ENCODE measurements at regions of chr5 and their contacts with region 1.

Region 1: GRCh38 chr5:59810041-59810440 is 83.5 kb downstream of the PDE4D start:
- DNase-seq: peak; percentile 55 to 71 (median 64)
- ATAC-seq: peak in 3 of 4 donors; percentile 52 to 63 (median 60)
- H3K4me3 ChIP-seq: peak overlapping the region in 1 of 12 donors; percentile 12
- H3K27ac ChIP-seq: no peak overlapping the region
- H3K4me1 ChIP-seq: peaks cover 0 to 6% (median 0%) of the 10 kb centered on the region in 12 donors
- H3K27me3 ChIP-seq: peaks cover 0 to 17% (median 6%) of the 10 kb centered on the region in 9 donors
- CTCF ChIP-seq: peak; percentile 87 to 96 (median 92)
- POLR2A ChIP-seq: no peak

Region 2: GRCh38 chr5:59923465-59923864 is 113.4 kb after region 1 on chr5:
- intact Hi-C with region 1: loop called in 4 of 10 experiments (anchors 5 to 10 kb)
- DNase-seq: no peak
- ATAC-seq: no peak
- H3K4me3 ChIP-seq: no peak overlapping the region
- H3K27ac ChIP-seq: no peak overlapping the region
- H3K4me1 ChIP-seq: no peaks in the 10 kb centered on the region
- H3K27me3 ChIP-seq: peaks cover 0 to 7% (median 0%) of the 10 kb centered on the region in 9 donors
- CTCF ChIP-seq: peak in 6 of 12 donors; percentile 14 to 31 (median 24)
- POLR2A ChIP-seq: no peak

Region 3: DNA sequence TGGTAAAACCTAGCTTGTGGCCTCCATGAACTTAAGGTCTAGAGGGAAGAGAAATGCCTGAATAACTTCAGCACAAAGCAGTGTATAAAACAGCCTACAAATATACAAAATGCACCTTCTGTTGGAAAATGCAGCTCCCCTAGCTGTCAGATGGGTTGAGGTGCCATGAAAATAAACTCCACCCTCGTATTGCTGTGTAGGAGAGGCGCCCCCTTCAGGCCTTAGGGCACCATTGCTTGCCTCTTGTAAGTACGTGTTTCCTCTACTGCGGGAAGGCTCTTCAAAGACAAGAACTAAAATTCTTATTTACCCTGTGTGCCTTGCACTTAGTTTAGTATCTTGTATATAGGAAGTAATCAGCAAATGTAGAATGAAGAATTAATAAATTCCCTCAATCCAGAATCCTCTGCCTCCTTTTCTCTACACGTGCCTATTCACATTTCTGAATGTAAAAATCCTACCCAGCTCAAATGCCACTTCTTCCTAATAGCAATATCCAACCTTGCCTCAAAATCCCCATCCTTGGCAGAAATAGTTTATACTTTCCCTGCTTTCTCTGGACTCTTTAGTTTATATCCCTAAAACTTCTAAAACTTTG is 477.2 kb after region 1 on chr5:
- intact Hi-C with region 1: loop called in 1 of 10 experiments (anchors 5 kb)
- DNase-seq: peak in 1 of 5 donors; percentile 16
- ATAC-seq: no peak
- H3K4me3 ChIP-seq: no peak overlapping the region
- H3K27ac ChIP-seq: no peak overlapping the region
- H3K4me1 ChIP-seq: no peaks in the 10 kb centered on the region
- H3K27me3 ChIP-seq: peaks cover 0 to 9% (median 0%) of the 10 kb centered on the region in 9 donors
- CTCF ChIP-seq: peak in 9 of 12 donors; percentile 11 to 68 (median 36)
- POLR2A ChIP-seq: no peak

Region 4: DNA sequence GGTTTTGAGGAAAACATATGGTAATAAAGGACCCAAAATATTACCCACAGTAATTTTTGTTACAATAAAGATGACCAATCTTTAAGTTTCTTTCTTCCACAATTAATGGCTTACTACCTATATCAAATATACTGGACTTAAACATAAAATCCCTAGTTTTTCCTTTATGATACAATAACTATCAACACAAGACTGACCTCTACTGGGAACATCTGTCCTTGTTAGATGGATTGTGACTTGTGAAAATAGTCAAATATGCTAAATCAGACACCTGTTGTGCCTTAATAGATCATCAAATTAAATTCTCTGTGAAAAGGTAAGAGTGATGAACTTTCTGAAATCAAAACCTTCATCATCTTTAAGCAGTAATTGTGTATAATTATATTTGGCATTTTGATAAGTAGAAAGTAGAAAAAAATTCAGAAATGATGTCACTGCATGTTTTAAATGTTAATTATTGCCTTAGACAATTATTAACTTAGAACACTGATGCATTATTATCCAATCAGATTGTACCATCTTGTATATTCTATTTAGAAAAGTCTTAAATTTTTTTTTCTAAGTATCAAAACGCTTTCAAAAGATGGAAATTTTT is 776.4 kb after region 1 on chr5:
- intact Hi-C with region 1: loop called (anchors 1 to 10 kb)
- DNase-seq: no peak
- ATAC-seq: no peak
- H3K4me3 ChIP-seq: no peak overlapping the region
- H3K27ac ChIP-seq: no peak overlapping the region
- H3K4me1 ChIP-seq: no peaks in the 10 kb centered on the region
- H3K27me3 ChIP-seq: no peaks in the 10 kb centered on the region
- CTCF ChIP-seq: peak; percentile 26 to 62 (median 46)
- POLR2A ChIP-seq: no peak

Region 5: GRCh38 chr5:60668686-60669304 is 858.8 kb after region 1 on chr5:
- intact Hi-C with region 1: loop called in 7 of 10 experiments (anchors 2 to 10 kb)
- DNase-seq: no peak
- ATAC-seq: no peak
- H3K4me3 ChIP-seq: no peak overlapping the region
- H3K27ac ChIP-seq: no peak overlapping the region
- H3K4me1 ChIP-seq: peaks cover 0 to 5% (median 0%) of the 10 kb centered on the region in 12 donors
- H3K27me3 ChIP-seq: no peaks in the 10 kb centered on the region
- CTCF ChIP-seq: peak; percentile 46 to 73 (median 64)
- POLR2A ChIP-seq: no peak

Measured in heart left ventricle (tissue), 16 donors.